ENCODE measurements at regions of chr2 and their contacts with region 1.

Region 1: DNA sequence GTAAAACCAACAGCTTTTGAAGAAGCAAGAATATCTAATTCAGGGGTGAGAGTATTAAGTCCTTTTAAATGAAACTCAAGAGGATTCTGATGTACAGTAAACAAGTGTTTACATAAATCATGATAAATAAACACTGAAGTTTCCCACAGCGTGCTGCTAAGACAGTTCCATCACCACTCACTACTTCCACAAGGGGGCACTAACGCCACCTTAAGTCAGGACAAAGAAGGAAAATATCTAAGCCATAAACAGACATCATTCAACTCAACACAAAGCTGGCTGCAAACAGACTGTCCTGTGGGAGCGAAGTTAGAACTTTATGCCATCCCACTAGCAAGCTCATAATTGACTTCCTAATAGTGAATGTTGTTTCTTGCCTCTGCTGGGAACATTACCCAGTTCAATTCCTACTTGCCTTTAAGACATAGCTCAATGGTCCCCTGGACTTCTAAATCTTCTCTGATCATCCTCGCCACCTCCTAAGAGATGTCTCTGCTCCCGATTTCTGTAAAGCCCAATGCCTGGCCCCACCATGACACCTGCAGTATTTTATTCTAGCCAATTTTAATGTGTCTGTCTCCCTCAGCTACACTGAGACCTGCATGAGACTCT is 36.5 kb downstream of the MRPL44 start:
- DNase-seq: peak; percentile 39 to 56
- H3K4me3 ChIP-seq: no peak overlapping the region
- H3K27ac ChIP-seq: no peak overlapping the region
- H3K4me1 ChIP-seq: no peaks in the 10 kb centered on the region
- H3K27me3 ChIP-seq: no peaks in the 10 kb centered on the region
- CTCF ChIP-seq: peak; percentile 67 to 80 (median 77)
- POLR2A ChIP-seq: no peak

Region 2: DNA sequence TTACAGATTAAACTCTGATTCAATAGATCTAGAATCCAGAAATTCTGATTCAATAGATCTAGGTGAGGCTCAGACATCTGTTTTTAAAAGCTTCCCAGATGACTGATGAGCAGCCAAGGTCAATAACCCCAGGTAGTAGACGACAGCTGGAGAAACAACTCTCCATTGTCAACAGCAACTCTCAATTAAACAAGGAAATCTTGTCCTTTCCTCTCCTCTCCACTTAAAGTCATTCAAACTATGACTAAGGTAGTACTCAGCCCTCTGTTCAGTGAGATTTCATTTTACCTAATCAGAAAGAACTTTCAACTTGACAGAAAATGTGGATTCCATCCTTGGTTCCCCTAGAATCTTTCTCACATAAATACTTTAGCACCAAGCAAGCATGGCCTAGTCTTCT is 297.0 kb before region 1 on chr2:
- intact Hi-C with region 1: no loop called
- DNase-seq: no peak
- H3K4me3 ChIP-seq: no peak overlapping the region
- H3K27ac ChIP-seq: no peak overlapping the region
- H3K4me1 ChIP-seq: no peaks in the 10 kb centered on the region
- H3K27me3 ChIP-seq: no peaks in the 10 kb centered on the region
- CTCF ChIP-seq: no peak
- POLR2A ChIP-seq: no peak

Region 3: GRCh38 chr2:224284134-224284946 is 290.6 kb after region 1 on chr2:
- intact Hi-C with region 1: loop called (anchors 5 kb)
- DNase-seq: no peak
- H3K4me3 ChIP-seq: no peak overlapping the region
- H3K27ac ChIP-seq: no peak overlapping the region
- H3K4me1 ChIP-seq: no peaks in the 10 kb centered on the region
- H3K27me3 ChIP-seq: peaks cover 0 to 4% of the 10 kb centered on the region in 2 donors
- CTCF ChIP-seq: peak; percentile 27 to 74 (median 69)
- POLR2A ChIP-seq: no peak

Measured in uterus (tissue), 4 donors.